OCI-LY7 (cell line): ENCODE measurements at regions of chr22 and their contacts with region 1.

Region 1: DNA sequence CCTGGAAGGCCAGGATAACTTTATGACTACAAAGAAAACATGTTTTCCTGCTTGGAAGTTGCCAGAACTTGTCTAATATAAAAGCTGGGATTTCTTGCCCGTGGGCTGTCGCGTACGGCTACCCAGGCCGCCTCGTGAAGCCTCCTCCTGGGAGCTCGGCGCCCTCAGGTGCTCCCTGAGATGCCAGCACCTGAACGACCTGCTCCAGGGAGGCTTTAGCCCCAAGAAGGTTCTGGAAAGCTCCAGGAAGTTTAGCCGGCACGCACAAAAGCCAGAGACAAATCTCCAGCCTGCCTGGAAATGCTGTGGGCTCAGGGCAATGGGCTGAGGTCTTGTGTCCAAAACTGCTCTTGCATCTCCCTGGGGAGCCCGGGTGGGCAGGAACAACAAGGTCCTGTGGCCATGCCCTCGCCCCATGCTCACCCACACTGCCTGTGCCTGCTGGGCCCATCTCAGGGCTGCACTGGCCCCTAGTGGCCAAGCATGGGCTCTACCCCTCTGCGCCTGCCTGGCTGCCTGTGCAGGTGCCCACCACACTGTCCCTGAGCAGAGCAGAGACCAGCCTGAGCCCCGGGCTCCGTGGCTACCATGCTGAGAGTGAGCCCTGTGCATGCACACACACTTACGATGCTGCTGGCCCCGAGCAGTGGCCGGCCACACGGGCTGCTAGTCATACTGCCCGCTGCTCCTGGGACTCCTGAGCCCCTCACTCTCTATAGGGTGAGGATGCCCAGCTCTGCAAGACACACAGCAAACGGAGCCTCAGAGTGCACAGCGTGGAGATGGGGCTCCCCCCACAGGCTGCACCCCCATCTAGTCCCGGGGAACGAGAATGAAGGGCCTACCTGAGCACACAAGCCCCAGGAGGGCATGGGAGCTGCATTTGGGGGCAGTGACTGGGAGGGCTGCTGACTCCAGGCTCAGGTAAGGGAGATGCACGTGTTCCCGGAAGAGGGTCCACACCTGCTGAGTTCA is 4.9 kb upstream of the CELSR1 start:
- DNase-seq: peak; percentile 71
- H3K4me3 ChIP-seq: no peak overlapping the region
- H3K27ac ChIP-seq: no peak overlapping the region
- H3K4me1 ChIP-seq: no peaks in the 10 kb centered on the region
- CTCF ChIP-seq: peak; percentile 90

Region 2: DNA sequence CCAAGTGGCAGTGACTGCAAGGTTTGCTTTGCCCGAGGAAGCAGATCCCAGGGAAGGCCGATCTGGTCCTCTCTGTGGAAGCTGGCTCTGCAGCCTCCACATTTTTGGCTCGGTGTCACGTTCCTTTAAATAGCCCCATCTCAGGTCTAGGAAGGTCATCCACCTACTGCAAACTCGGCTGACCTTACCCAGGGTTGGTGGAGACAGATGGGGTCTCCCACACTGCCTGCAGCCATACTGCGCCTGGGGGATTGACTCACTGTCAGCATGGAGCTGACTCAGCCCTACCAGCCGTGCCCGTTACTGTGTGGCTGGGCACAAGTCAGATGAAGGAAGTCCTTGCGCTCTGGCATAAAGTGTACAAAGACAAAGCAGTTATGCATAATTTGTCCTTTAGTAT is 309.1 kb before region 1 on chr22:
- CTCF ChIA-PET with region 1: no interaction called
- POLR2A ChIA-PET with region 1: no interaction called
- intact Hi-C with region 1: no loop called
- DNase-seq: no peak
- H3K4me3 ChIP-seq: no peak overlapping the region
- H3K27ac ChIP-seq: no peak overlapping the region
- H3K4me1 ChIP-seq: peaks cover 8% of the 10 kb centered on the region
- CTCF ChIP-seq: no peak

Region 3: GRCh38 chr22:46355371-46355995 is 186.8 kb before region 1 on chr22:
- CTCF ChIA-PET with region 1: no interaction called
- POLR2A ChIA-PET with region 1: no interaction called
- intact Hi-C with region 1: loop called (anchors 1 kb)
- DNase-seq: peak; percentile 65
- H3K4me3 ChIP-seq: no peak overlapping the region
- H3K27ac ChIP-seq: no peak overlapping the region
- H3K4me1 ChIP-seq: no peaks in the 10 kb centered on the region
- CTCF ChIP-seq: peak; percentile 85

Region 4: GRCh38 chr22:46367707-46368191 is 174.5 kb before region 1 on chr22:
- CTCF ChIA-PET with region 1: interaction called, 7 read pairs
- POLR2A ChIA-PET with region 1: no interaction called
- intact Hi-C with region 1: loop called (anchors 1 kb)
- DNase-seq: peak; percentile 62
- H3K4me3 ChIP-seq: no peak overlapping the region
- H3K27ac ChIP-seq: no peak overlapping the region
- H3K4me1 ChIP-seq: peaks cover 18% of the 10 kb centered on the region
- CTCF ChIP-seq: peak; percentile 88

Region 5: GRCh38 chr22:46415776-46416519 is 126.3 kb before region 1 on chr22:
- CTCF ChIA-PET with region 1: no interaction called
- POLR2A ChIA-PET with region 1: no interaction called
- intact Hi-C with region 1: no loop called
- DNase-seq: no peak
- H3K4me3 ChIP-seq: no peak overlapping the region
- H3K27ac ChIP-seq: no peak overlapping the region
- H3K4me1 ChIP-seq: peaks cover 3% of the 10 kb centered on the region
- CTCF ChIP-seq: no peak

Region 6: GRCh38 chr22:46649141-46650077 is 107.1 kb after region 1 on chr22:
- CTCF ChIA-PET with region 1: no interaction called
- POLR2A ChIA-PET with region 1: no interaction called
- intact Hi-C with region 1: no loop called
- DNase-seq: no peak
- H3K4me3 ChIP-seq: no peak overlapping the region
- H3K27ac ChIP-seq: no peak overlapping the region
- H3K4me1 ChIP-seq: peaks cover 10% of the 10 kb centered on the region
- CTCF ChIP-seq: no peak

Region 7: DNA sequence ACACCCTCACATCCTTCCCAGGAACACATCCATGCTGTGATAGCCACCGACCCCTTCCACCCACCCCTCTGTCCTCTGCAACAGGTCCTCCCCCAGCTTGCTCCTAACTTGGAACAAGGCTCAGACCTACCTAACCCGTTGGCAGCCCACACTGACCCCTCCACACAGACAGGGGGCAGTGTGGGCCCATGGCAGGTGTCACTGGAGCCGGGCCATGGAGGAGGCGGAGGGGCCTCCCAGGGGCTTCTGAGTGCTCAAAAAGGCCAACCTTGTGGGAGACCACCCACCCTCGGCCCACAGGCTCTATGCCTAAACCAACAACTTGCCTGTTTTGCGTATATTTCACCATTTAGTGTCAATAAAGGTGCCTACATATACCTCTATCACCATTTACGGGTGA is 138.7 kb after region 1 on chr22:
- CTCF ChIA-PET with region 1: no interaction called
- POLR2A ChIA-PET with region 1: no interaction called
- intact Hi-C with region 1: no loop called
- DNase-seq: peak; percentile 40
- H3K4me3 ChIP-seq: no peak overlapping the region
- H3K27ac ChIP-seq: no peak overlapping the region
- H3K4me1 ChIP-seq: peaks cover 32% of the 10 kb centered on the region
- CTCF ChIP-seq: peak; percentile 69